ENCODE measurements at regions of chr6 and their contacts with region 1.

Region 1: DNA sequence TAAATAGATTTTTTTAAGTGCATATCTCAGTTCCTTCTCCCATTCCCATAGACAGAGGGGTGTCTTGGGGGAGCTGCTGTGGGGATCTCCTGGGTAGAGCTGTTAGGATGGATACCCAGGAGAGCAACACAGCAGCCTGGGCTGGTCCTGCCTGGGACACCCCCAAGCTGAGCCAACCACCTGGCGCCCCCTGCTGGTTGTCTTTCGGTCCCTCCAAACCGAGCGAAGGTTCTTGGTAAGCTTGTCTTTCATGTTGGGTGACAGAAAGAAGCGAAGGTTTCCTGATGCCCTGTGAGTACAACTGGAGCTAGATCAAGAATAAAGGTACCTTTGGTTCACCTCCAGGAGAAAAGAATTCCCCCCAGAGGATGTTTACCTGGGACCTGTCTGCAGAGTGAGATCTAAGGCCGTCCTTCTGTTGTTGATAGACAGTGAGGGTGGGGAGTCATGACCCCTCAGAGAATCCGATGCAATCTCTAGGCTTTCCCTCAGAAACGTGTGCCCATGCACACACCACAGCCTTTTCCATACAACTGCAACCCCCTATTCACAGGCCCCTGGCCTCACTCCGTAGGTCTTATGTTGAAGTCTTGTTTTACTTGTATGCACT is 50.8 kb downstream of the SNX9 start:
- DNase-seq: peak; percentile 93
- ATAC-seq: peak; percentile 86
- H3K4me3 Mint-ChIP-seq: no peak overlapping the region
- H3K27ac Mint-ChIP-seq: no peak overlapping the region
- H3K4me1 Mint-ChIP-seq: peaks cover 39% of the 10 kb centered on the region
- H3K27me3 Mint-ChIP-seq: no peaks in the 10 kb centered on the region
- CTCF ChIP-seq: peak; percentile 91

Region 2: GRCh38 chr6:157198419-157199279 is 675.2 kb before region 1 on chr6:
- CTCF ChIA-PET with region 1: no interaction called
- POLR2A ChIA-PET with region 1: no interaction called
- intact Hi-C with region 1: no loop called
- DNase-seq: no peak
- ATAC-seq: no peak
- H3K4me3 Mint-ChIP-seq: no peak overlapping the region
- H3K27ac Mint-ChIP-seq: no peak overlapping the region
- H3K4me1 Mint-ChIP-seq: peaks cover 5% of the 10 kb centered on the region
- H3K27me3 Mint-ChIP-seq: no peaks in the 10 kb centered on the region
- CTCF ChIP-seq: no peak

Region 3: DNA sequence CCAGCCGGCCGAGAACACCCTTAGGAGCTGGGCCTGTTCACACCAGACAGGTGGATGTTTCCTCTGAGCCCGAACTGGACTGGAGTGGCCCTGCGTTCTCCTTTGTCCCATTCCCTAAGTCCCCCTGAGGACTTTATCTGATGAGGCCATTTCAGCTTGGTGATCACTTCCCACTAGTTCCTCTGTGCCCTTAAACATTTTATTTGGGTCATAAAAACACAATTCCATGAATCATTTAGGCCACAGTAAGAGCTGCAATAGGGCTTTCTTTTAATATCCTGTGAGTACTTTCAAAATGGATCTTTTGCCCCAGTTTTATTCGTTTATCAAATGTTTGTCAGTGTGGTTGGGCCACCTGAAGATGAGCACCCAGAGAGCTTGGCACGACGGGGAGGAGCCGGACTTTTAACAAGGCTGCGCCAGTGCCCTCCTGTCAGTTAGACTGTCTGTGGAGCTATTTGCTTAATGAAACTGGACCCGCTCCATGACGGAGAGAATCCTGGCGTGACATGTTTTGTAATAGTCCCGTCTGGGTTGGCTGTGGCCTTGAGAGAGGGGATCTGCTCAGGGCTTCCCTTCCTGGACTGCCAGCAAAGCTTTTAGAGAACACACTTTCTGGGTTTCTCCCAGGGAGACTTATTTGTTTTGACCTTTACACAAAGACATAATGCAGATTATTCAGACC is 439.3 kb before region 1 on chr6:
- CTCF ChIA-PET with region 1: no interaction called
- POLR2A ChIA-PET with region 1: no interaction called
- intact Hi-C with region 1: no loop called
- DNase-seq: no peak
- ATAC-seq: no peak
- H3K4me3 Mint-ChIP-seq: no peak overlapping the region
- H3K27ac Mint-ChIP-seq: no peak overlapping the region
- H3K4me1 Mint-ChIP-seq: no peaks in the 10 kb centered on the region
- H3K27me3 Mint-ChIP-seq: no peaks in the 10 kb centered on the region
- CTCF ChIP-seq: no peak

Region 4: GRCh38 chr6:157667211-157668008 is 206.4 kb before region 1 on chr6:
- CTCF ChIA-PET with region 1: interaction called, 8 read pairs
- POLR2A ChIA-PET with region 1: no interaction called
- intact Hi-C with region 1: loop called (anchors 5 kb)
- DNase-seq: peak; percentile 71
- ATAC-seq: peak; percentile 65
- H3K4me3 Mint-ChIP-seq: no peak overlapping the region
- H3K27ac Mint-ChIP-seq: no peak overlapping the region
- H3K4me1 Mint-ChIP-seq: peaks cover 23% of the 10 kb centered on the region
- H3K27me3 Mint-ChIP-seq: peaks cover 3% of the 10 kb centered on the region
- CTCF ChIP-seq: peak; percentile 99

Region 5: DNA sequence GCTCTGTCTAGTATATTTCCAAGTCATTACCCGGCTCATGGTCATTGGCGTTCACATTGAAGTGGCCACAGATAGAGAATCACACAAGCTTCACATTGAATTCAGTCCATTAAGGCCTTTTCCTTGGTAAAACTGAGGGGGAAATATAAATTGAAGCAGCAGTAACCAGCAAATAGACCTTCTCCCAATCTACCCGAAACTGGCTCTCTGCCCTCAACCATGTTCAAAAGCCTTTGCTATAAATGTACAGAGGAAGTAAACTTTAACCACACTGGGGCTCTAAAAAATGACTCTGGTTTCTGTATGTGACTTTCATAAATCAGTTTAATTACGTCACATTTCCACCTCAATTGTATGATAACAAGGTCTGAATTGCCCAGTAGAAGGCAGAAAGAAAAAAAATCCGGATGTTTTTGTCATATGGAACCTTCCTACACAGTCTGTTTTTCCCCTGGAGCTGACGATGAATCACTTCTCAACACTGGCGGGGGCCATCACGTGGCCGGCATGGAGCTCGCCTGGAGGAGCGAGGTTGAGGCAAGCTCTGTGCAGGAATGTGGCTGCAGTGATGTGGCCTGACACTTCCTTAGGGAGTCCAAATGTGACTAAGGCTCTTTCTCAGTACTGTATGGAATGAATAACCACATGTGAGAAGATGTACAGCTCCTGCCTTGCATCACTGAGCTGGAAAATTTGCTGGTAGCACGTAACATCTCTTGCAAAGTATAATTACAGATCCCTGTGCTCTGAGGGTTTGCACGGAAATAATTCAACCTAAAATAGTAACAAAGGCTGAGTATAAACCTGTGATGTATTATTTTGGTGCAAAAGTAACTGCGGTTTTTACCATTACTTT is 109.4 kb before region 1 on chr6:
- CTCF ChIA-PET with region 1: interaction called, 50 read pairs
- POLR2A ChIA-PET with region 1: interaction called, 4 read pairs
- intact Hi-C with region 1: no loop called
- DNase-seq: peak; percentile 88
- ATAC-seq: peak; percentile 58
- H3K4me3 Mint-ChIP-seq: peak overlapping the region; percentile 40
- H3K27ac Mint-ChIP-seq: peak overlapping the region; percentile 97
- H3K4me1 Mint-ChIP-seq: peaks cover 87% of the 10 kb centered on the region
- H3K27me3 Mint-ChIP-seq: no peaks in the 10 kb centered on the region
- CTCF ChIP-seq: no peak

Region 6: GRCh38 chr6:157861814-157862213 is 12.0 kb before region 1 on chr6:
- CTCF ChIA-PET with region 1: interaction called, 20 read pairs
- POLR2A ChIA-PET with region 1: interaction called, 4 read pairs
- intact Hi-C with region 1: no loop called
- DNase-seq: no peak
- ATAC-seq: no peak
- H3K4me3 Mint-ChIP-seq: no peak overlapping the region
- H3K27ac Mint-ChIP-seq: no peak overlapping the region
- H3K4me1 Mint-ChIP-seq: peaks cover 74% of the 10 kb centered on the region
- H3K27me3 Mint-ChIP-seq: no peaks in the 10 kb centered on the region
- CTCF ChIP-seq: no peak

Region 7: GRCh38 chr6:157891544-157892362 is 17.9 kb after region 1 on chr6:
- CTCF ChIA-PET with region 1: interaction called, 18 read pairs
- POLR2A ChIA-PET with region 1: no interaction called
- intact Hi-C with region 1: no loop called
- DNase-seq: no peak
- ATAC-seq: peak; percentile 33
- H3K4me3 Mint-ChIP-seq: no peak overlapping the region
- H3K27ac Mint-ChIP-seq: peak overlapping the region; percentile 69
- H3K4me1 Mint-ChIP-seq: peaks cover 50% of the 10 kb centered on the region
- H3K27me3 Mint-ChIP-seq: no peaks in the 10 kb centered on the region
- CTCF ChIP-seq: no peak

Region 8: GRCh38 chr6:157912326-157912725 is 38.5 kb after region 1 on chr6:
- CTCF ChIA-PET with region 1: interaction called, 11 read pairs
- POLR2A ChIA-PET with region 1: no interaction called
- intact Hi-C with region 1: no loop called
- DNase-seq: no peak
- ATAC-seq: no peak
- H3K4me3 Mint-ChIP-seq: no peak overlapping the region
- H3K27ac Mint-ChIP-seq: no peak overlapping the region
- H3K4me1 Mint-ChIP-seq: peaks cover 22% of the 10 kb centered on the region
- H3K27me3 Mint-ChIP-seq: no peaks in the 10 kb centered on the region
- CTCF ChIP-seq: no peak

Region 9: DNA sequence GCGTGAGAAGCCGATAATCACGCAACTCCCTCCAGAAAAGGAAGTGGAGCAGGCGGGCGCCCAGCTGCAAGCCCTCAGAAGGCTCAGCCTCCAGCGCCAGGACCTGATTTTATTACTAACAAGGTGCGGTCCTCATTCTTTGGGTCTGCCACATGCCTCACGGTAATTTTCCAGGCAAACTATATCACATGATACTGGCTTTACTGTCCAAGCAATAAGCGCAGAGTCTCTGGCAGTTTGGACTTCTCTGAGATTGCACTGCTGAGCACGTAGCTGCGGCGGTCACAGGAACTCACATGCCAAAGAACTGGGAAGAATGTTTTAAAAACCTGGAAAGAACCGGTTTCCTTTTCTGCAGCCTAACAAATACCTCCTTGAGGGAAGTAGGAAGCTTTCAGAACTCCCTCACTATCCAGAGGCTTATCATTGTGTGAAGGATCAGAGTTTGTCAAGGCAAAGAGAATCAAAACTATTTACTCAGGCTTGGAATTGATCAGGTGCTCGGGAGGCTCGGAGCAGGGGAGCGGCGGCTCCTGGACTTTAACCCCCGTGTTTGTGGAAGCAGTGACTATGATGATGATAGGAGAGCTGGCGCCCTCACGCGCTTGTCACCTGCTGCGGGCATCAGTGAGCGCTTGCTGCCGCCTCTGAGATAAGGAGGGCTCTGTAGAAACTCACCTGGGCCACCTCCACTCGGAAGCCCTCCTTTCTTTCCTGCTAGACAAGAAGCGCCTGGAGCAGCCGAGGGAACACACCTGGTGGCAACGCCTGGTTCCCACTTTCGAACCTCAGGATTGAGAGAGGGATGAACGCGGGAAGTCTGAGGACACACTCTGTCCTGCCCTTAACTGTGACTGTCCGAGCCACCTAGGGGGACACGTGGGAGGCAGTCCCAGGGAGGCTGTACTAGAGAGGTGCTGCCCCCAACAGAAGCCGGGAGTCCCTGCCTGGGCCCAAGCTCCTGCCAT is 80.6 kb after region 1 on chr6:
- CTCF ChIA-PET with region 1: no interaction called
- POLR2A ChIA-PET with region 1: no interaction called
- intact Hi-C with region 1: no loop called
- DNase-seq: no peak
- ATAC-seq: no peak
- H3K4me3 Mint-ChIP-seq: no peak overlapping the region
- H3K27ac Mint-ChIP-seq: no peak overlapping the region
- H3K4me1 Mint-ChIP-seq: peaks cover 2% of the 10 kb centered on the region
- H3K27me3 Mint-ChIP-seq: no peaks in the 10 kb centered on the region
- CTCF ChIP-seq: no peak

Region 10: DNA sequence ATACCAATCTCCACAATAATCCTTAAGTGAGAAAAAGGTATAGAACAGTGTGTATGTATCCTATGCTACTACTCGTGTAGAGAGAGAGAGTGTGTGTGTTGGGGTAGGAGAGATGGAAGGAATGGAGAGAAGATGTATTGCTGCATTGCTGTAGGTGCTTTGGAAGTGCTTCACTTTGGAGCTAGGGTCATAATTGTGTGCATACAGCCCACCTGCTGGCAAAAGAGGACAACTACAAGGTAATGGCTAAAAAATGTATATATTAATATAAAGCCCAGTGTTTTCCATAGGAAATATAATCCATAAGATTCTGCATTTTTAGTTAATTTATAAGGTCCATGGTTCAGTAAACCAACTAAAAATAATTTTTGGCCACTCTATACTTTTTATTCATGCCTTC is 258.1 kb after region 1 on chr6:
- CTCF ChIA-PET with region 1: no interaction called
- POLR2A ChIA-PET with region 1: no interaction called
- intact Hi-C with region 1: no loop called
- DNase-seq: peak; percentile 16
- ATAC-seq: peak; percentile 67
- H3K4me3 Mint-ChIP-seq: no peak overlapping the region
- H3K27ac Mint-ChIP-seq: no peak overlapping the region
- H3K4me1 Mint-ChIP-seq: no peaks in the 10 kb centered on the region
- H3K27me3 Mint-ChIP-seq: no peaks in the 10 kb centered on the region
- CTCF ChIP-seq: peak; percentile 48

Measured in activated CD8-positive, alpha-beta T cell treated with anti-CD3 and anti-CD28 coated beads for 36 hours (primary cell).